Activated CD8-positive, alpha-beta T cell treated with anti-CD3 and anti-CD28 coated beads for 36 hours (primary cell): ENCODE measurements at regions of chr7 and their contacts with region 1.

Region 1: DNA sequence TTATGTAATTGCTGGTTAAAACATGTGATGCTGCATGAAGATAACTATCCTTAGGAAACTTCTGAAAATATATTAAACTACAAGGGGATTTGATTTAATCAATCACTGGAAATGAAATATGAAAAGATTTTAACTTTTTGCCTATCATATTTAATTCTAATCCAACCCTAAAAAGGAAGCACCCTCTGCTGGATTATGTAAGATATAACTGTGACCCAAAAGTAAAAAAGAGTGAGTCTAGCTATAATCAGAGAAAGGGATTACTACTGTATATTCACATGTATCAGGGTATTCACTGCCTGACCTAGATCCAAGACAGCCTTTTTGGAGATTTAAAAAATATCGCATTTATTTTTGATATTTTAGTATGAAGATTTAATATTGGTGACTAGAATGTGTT is 295.5 kb downstream of the MDFIC start:
- DNase-seq: no peak
- ATAC-seq: no peak
- H3K4me3 Mint-ChIP-seq: no peak overlapping the region
- H3K27ac Mint-ChIP-seq: no peak overlapping the region
- H3K4me1 Mint-ChIP-seq: peaks cover 4% of the 10 kb centered on the region
- H3K27me3 Mint-ChIP-seq: no peaks in the 10 kb centered on the region
- CTCF ChIP-seq: peak; percentile 28

Region 2: GRCh38 chr7:114865564-114865963 is 351.8 kb before region 1 on chr7:
- CTCF ChIA-PET with region 1: interaction called, 18 read pairs
- POLR2A ChIA-PET with region 1: no interaction called
- intact Hi-C with region 1: loop called (anchors 10 kb)
- DNase-seq: peak; percentile 71
- ATAC-seq: peak; percentile 83
- H3K4me3 Mint-ChIP-seq: no peak overlapping the region
- H3K27ac Mint-ChIP-seq: no peak overlapping the region
- H3K4me1 Mint-ChIP-seq: peaks cover 4% of the 10 kb centered on the region
- H3K27me3 Mint-ChIP-seq: no peaks in the 10 kb centered on the region
- CTCF ChIP-seq: peak; percentile 72